ENCODE measurements at regions of chr10 and their contacts with region 1.

Region 1: DNA sequence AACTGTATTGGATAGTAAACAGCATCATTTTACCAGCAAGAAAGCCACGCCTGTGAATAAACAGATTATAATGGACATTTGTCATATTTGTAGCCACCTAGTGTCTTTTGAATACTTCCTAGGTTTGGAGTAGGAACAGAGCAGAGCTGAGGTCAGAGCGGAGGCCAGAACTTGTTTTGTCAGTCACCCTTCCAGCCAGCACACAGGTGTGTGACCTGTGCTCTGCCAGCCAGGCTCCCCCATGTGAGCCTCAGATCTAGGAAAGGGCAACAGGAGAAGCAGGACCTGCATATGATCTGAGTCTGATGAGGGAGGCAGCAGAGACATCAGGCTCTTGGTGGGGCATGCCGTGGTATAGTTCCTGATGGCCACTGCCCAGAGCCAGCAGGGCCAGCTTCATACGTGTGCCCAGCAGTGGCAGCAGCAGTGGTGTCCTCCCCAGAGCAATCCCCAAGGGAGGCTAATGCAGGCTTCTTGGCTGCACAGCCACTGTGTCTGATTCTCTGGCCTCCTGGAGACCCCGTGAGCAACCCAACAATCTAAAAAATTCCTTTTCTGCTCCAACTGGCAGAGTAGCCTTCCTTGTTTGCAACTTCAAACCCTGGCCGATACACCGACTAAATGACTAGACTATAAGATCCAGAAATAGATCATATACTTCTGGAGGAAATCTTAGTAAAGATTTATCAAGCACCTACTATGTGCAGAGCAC is 230.7 kb upstream of the ZMIZ1 start:
- DNase-seq: no peak
- ATAC-seq: no peak
- H3K4me3 ChIP-seq: no peak overlapping the region
- H3K4me3 Mint-ChIP-seq: no peak overlapping the region
- H3K27ac ChIP-seq: no peak overlapping the region
- H3K27ac Mint-ChIP-seq: no peak overlapping the region
- H3K4me1 ChIP-seq: no peaks in the 10 kb centered on the region
- H3K4me1 Mint-ChIP-seq: no peaks in the 10 kb centered on the region
- H3K27me3 ChIP-seq: no peaks in the 10 kb centered on the region
- H3K27me3 Mint-ChIP-seq: peaks cover 7% of the 10 kb centered on the region
- CTCF ChIP-seq: no peak

Region 2: DNA sequence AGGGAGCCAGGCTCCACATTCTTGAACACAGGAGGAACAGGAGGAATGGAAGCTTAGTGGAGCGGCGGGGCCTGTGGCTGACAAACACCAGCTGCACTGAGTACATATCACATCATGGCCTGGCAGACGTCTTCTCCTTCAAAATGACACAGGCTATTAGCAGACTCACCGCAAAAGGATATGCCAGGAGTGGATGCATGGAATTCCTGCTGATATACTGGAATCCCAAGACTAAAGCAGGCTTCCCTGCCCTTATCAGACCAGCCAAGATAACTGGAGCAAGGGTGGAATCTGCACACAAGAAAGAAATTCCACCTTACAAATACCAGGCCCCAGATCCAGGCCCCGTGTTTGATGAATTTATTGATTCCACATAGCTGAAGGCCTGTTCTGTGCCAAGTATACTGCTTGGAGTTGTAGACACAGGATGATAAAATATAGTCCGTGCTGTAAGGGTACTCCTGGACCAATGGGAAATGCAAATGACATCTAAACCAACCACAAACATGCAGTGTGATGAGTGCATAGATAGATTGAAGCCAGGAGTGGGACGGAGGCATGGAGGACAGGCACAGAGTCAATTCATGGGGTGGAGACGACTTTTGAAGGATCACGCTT is 249.8 kb before region 1 on chr10:
- CTCF ChIA-PET with region 1: no interaction called
- POLR2A ChIA-PET with region 1: no interaction called
- intact Hi-C with region 1: no loop called
- DNase-seq: no peak
- ATAC-seq: no peak
- H3K4me3 ChIP-seq: no peak overlapping the region
- H3K4me3 Mint-ChIP-seq: no peak overlapping the region
- H3K27ac ChIP-seq: no peak overlapping the region
- H3K27ac Mint-ChIP-seq: no peak overlapping the region
- H3K4me1 ChIP-seq: no peaks in the 10 kb centered on the region
- H3K4me1 Mint-ChIP-seq: no peaks in the 10 kb centered on the region
- H3K27me3 ChIP-seq: no peaks in the 10 kb centered on the region
- H3K27me3 Mint-ChIP-seq: no peaks in the 10 kb centered on the region
- CTCF ChIP-seq: no peak

Region 3: GRCh38 chr10:78861524-78862327 is 23.6 kb after region 1 on chr10:
- CTCF ChIA-PET with region 1: no interaction called
- POLR2A ChIA-PET with region 1: no interaction called
- intact Hi-C with region 1: loop called in 1 of 2 experiments (anchors 1 kb)
- DNase-seq: peak in 1 of 9 experiments; percentile 41
- ATAC-seq: no peak
- H3K4me3 ChIP-seq: no peak overlapping the region
- H3K4me3 Mint-ChIP-seq: no peak overlapping the region
- H3K27ac ChIP-seq: no peak overlapping the region
- H3K27ac Mint-ChIP-seq: no peak overlapping the region
- H3K4me1 ChIP-seq: no peaks in the 10 kb centered on the region
- H3K4me1 Mint-ChIP-seq: no peaks in the 10 kb centered on the region
- H3K27me3 ChIP-seq: no peaks in the 10 kb centered on the region
- H3K27me3 Mint-ChIP-seq: peaks cover 6% of the 10 kb centered on the region
- CTCF ChIP-seq: no peak

Measured in CD8-positive, alpha-beta T cell (primary cell).